Panc1 (cell line): ENCODE measurements at regions of chr17 and their contacts with region 1.

Region 1: DNA sequence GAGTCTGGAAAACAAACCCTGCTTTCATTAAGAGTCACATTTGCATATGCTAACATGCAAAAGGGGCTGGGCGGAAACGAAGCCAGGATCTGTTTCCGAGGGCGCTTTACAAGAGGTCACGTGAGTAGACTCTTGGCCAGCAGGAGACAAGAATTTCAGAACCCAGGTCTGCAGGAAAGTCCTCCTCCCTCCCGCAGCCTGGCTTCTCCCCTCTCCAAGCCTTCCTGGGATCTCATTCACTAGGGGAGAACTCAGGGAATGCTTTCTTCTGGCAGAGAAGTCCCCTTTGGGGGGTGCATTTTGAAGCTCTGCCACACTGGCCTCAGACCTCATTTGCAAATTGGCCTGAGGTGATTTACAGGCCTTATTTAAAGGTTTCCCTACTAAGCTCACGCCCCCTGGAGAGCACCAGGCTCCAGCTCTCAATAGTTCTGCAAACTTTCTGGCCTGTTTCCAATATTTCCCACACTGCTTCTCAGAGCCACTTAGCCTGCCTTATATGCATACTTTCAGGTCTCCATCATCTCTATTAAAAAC is 57.2 kb upstream of the CACNG5 start:
- DNase-seq: no peak
- ATAC-seq: no peak
- H3K4me3 ChIP-seq: no peak overlapping the region
- H3K27ac ChIP-seq: no peak overlapping the region
- H3K4me1 ChIP-seq: no peaks in the 10 kb centered on the region
- H3K27me3 ChIP-seq: no peaks in the 10 kb centered on the region
- CTCF ChIP-seq: no peak

Region 2: DNA sequence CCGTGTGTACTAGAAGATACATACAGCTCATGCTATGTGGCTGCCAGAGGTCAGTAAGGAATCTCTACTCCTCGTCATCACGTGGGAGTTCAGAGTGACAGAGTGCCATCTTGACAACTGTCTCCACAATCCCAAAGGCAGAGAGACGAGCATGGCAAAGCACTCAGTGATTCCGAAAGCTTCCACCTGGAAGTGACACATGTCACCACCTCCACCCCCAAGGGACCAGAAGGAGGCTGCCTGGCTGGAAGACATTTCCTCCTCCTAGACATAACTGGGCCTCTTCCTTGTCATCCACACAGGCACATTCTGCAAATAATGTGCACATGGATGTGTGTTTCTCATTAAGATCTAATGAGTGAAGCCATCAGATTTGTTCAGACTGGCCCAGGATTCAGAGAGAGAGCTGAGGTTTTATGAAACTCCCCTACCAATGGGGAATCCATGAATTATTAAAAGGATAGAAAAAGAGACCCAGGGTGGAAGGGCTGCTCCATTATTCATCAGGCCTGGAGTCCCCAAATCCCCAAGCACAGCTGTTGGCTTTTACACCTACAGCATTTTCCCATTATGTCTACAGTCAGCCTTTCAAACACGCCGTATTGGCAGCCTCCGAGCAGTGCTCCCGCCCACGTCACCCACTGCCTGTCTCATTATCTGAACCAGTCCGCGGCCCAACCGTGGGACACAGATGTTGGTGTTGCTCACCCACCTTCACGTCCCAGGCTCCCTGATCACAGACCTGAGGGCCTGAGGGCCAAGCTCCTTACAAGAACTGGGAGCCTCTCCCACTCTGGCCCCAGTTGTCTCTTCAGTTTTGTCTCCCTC is 53.8 kb after region 1 on chr17:
- CTCF ChIA-PET with region 1: no interaction called
- POLR2A ChIA-PET with region 1: interaction called, 14 read pairs
- in situ Hi-C with region 1: no loop called
- intact Hi-C with region 1: no loop called
- DNase-seq: no peak
- ATAC-seq: no peak
- H3K4me3 ChIP-seq: no peak overlapping the region
- H3K27ac ChIP-seq: no peak overlapping the region
- H3K4me1 ChIP-seq: no peaks in the 10 kb centered on the region
- H3K27me3 ChIP-seq: no peaks in the 10 kb centered on the region
- CTCF ChIP-seq: no peak